HEK293 (cell line): ENCODE measurements at regions of chr20 and their contacts with region 1.

Region 1: DNA sequence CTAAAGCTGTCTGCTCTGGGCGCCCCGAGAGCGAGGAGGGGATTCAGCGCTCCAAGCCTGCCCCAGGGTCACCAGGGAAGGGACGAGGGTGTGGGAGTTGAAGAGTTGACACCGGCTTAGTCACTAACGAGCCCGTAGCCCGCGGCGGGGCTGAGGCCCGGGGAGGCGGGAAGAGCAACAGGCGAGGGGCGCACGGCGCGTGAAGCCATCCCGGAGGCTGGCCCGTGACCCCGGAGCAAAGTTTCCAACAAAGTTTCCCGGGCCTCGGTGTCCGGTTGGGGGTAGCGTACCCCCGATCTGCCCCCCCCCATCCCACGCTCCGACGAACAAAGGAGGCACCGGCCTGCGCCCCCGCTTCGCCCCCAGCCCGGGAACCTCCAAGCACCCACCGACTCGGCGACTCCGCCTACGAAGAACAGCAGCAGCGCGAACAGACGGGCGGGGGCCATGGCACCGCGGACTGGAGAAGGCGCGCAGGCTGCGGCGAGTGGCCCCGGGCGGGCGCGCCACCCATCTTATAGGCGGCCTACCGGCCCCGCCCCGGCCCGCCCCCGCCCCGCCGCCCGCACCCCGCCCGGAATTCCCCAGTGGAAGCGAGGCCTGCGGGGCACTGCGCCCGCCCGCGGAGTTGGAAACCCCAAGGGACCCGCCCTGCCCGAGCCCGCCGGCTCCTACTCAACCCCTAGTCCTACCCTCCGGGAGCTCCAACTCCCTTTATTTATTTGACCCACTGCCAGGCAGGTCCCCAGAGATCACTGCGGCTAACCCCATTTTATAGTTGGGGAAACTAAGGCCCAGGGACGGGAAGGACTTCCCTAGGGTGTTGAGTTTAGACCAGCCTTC is at the start of gene SDC4:
- H3K4me3 ChIP-seq: peak within 1 kb of the TSS; percentile 52
- H3K27ac ChIP-seq: peak within 1 kb of the TSS; percentile 45; the same call in 1 of the 2 replicates
- H3K4me1 ChIP-seq: peaks cover 21% of the 10 kb centered on the region
- CTCF ChIP-seq: no peak

Region 2: DNA sequence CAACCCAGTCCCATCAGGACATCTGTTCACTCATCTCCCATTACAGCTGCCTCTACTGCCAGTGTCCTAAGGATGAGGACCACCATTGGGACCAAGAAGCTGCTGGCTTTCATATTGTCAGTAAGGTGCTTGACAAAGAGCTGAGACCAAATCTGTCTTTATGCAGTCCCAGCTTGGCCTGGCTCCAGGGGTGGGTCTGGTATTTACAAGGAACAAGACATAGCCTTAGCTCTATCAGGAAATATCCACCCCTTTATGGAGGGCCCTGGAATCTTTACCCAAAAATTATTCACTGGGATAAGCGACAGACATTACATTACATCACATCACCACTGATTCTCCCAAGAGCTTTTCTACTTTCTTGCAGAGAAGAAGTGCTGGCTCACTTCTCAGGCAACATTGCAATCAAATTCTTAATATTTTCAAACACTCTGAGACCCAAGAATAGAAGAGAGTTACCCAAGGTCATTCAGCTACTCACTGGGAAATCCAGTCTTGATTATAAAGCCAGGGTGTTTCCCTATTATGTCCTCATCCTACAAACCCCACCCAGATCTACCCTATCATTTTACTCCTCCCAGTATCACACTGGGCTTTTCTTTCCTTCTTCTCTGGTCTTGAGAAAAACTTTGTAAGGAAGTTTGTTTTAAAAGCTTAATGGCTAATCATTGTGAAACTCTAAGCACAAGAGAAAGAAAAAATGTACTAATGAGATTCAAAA is 184.9 kb before region 1 on chr20:
- CTCF ChIA-PET with region 1: no interaction called
- POLR2A ChIA-PET with region 1: no interaction called
- H3K4me3 ChIP-seq: no peak overlapping the region
- H3K27ac ChIP-seq: no peak overlapping the region
- H3K4me1 ChIP-seq: no peaks in the 10 kb centered on the region
- CTCF ChIP-seq: no peak

Region 3: DNA sequence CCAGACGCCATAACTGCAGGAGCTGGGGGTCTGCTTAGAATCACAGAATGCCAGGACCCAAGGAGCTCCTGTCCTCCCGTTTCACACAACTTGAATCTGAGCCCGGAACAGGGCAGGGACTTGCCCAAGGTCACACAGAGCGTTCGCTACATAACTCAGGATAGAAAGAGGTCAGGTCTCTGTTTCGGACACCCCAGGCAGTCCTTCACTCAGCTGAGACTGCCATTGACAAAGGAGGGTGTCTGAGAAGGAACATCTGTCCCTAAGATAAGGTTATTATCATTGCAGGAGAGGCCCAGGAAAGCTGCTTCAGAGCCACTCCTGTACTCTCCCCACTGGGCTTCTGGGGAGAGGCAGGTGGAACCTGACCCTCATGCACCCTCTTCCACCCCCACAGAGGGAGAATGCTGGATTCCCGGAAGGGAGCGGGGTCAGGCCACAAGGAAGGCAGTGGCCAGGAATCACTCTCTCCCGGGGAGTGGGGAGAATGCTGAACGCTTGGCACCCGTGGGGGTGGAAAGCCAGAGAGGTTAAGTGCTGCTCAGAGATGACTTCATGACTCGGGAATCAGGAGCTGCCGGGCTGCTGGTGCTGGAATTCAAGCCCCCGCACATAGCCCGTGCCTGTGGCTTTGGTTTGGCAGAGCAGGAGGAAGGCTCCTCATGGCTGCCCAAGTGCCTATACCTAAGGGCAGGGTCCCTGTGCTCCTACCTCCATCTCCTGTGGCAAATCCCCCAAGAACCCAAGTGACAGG is 10.6 kb before region 1 on chr20:
- CTCF ChIA-PET with region 1: interaction called, 3 read pairs
- POLR2A ChIA-PET with region 1: interaction called, 19 read pairs
- H3K4me3 ChIP-seq: no peak overlapping the region
- H3K27ac ChIP-seq: no peak overlapping the region
- H3K4me1 ChIP-seq: peaks cover 13% of the 10 kb centered on the region
- CTCF ChIP-seq: no peak

Region 4: GRCh38 chr20:45444050-45444449 is 95.9 kb after region 1 on chr20:
- CTCF ChIA-PET with region 1: no interaction called
- POLR2A ChIA-PET with region 1: no interaction called
- H3K4me3 ChIP-seq: no peak overlapping the region
- H3K27ac ChIP-seq: no peak overlapping the region
- H3K4me1 ChIP-seq: no peaks in the 10 kb centered on the region
- CTCF ChIP-seq: no peak